HepG2 (cell line): ENCODE measurements at regions of chr11 and their contacts with region 1.

Region 1: DNA sequence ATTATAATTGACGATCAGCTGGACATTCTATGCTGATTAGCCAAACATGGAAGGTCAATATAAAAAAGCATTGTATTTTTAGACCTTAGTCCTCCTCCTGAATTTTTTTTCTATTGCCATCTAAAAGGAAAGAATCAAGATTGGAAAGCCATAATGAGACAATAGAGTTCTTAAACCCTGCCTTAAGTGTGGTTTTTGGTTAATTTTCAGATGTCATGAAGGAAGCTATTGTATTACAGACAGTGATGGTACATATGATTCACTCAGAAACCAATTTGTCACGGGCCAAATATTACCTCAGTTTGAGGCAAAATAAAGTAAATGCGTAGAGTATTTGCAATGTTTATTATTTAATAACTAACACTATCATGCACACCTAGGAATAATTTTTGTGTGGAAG is 1164.0 kb upstream of the RAG2 start:
- DNase-seq: no peak
- ATAC-seq: no peak
- H3K4me3 ChIP-seq: no peak overlapping the region
- H3K27ac ChIP-seq: no peak overlapping the region
- H3K4me1 ChIP-seq: no peaks in the 10 kb centered on the region
- H3K27me3 ChIP-seq: no peaks in the 10 kb centered on the region
- CTCF ChIP-seq: no peak
- EP300 ChIP-seq: no peak
- POLR2A ChIP-seq: no peak
- RAD21 ChIP-seq: no peak

Region 2: DNA sequence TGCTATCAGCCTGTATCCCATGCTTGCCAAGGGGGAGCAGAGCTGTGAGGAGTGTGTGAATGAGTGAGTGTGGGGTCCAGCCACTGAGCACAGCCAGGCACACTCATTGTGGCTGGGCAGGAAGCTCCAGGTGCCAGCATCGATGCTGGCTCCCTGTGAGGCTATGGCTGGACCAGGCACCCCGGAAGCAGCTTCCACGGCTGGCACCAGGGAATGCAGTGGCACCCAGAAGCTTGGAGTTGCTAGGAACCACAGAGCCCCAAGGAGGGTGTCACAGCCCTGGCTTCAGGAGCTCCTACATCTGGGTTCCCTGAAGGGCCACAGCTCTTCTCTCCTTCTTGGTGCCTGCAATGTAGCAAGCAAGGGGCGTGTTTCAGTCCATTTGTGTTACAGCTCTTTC is 538.1 kb before region 1 on chr11:
- CTCF ChIA-PET with region 1: no interaction called
- POLR2A ChIA-PET with region 1: no interaction called
- in situ Hi-C with region 1: no loop called
- intact Hi-C with region 1: loop called (anchors 10 kb)
- DNase-seq: no peak
- ATAC-seq: no peak
- H3K4me3 ChIP-seq: no peak overlapping the region
- H3K27ac ChIP-seq: no peak overlapping the region
- H3K4me1 ChIP-seq: no peaks in the 10 kb centered on the region
- H3K27me3 ChIP-seq: no peaks in the 10 kb centered on the region
- CTCF ChIP-seq: no peak
- EP300 ChIP-seq: no peak
- POLR2A ChIP-seq: no peak
- RAD21 ChIP-seq: no peak

Region 3: GRCh38 chr11:38005597-38005996 is 243.5 kb after region 1 on chr11:
- CTCF ChIA-PET with region 1: no interaction called
- POLR2A ChIA-PET with region 1: no interaction called
- in situ Hi-C with region 1: no loop called
- intact Hi-C with region 1: no loop called
- DNase-seq: no peak
- ATAC-seq: no peak
- H3K4me3 ChIP-seq: no peak overlapping the region
- H3K27ac ChIP-seq: no peak overlapping the region
- H3K4me1 ChIP-seq: no peaks in the 10 kb centered on the region
- H3K27me3 ChIP-seq: no peaks in the 10 kb centered on the region
- CTCF ChIP-seq: no peak
- EP300 ChIP-seq: no peak
- POLR2A ChIP-seq: no peak
- RAD21 ChIP-seq: no peak